Posterior vena cava (tissue), 2 donors: ENCODE measurements at regions of chr18 and their contacts with region 1.

Region 1: GRCh38 chr18:49441338-49441938 is 19.0 kb downstream of the DYM start:
- DNase-seq: no peak

Region 2: GRCh38 chr18:49393011-49393410 is 48.4 kb before region 1 on chr18:
- intact Hi-C with region 1: loop called in 1 of 2 experiments (anchors 2 kb)
- DNase-seq: no peak

Region 3: GRCh38 chr18:49459404-49460171 is 18.1 kb after region 1 on chr18:
- intact Hi-C with region 1: no loop called
- DNase-seq: no peak

Region 4: DNA sequence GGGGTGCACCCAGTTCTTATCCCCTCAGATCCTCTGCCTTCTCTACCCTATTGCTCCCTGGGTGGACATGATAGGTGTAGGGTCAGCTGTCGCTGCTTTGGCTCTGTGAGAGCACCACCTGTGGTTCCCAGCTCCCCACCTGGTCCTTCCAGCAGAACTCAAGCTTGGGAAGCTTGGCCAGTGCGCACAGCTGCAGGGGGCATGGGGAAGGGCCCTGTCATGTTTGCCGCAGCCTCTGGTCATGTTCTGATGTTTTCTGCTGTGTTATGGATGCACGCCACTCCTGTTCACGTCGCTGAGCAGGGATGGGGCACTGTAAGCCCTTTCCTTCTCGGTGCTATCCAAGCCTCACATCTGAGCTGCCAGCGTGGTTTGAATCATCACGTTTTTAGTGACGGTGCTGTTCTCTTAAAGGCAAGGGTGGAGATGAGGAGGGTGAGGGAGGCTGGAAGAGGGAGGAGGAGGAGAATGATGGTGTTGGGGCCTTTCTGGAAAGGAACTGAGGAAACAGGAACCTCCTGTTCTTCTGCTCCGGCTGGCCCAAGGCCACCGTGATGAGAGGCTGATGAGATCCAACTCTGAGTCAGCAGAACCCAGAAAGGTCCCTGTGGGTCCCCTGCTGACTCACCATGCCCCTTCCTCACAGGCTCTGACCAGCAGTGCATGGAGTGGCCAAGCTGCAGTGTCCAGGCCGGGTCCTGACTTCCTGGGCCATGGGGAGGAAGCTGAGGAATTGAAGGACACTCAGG is 198.4 kb after region 1 on chr18:
- intact Hi-C with region 1: no loop called
- DNase-seq: peak; percentile 78